Right ventricle myocardium superior (tissue), 1 donor: ENCODE measurements at regions of chr10 and their contacts with region 1.

Region 1: DNA sequence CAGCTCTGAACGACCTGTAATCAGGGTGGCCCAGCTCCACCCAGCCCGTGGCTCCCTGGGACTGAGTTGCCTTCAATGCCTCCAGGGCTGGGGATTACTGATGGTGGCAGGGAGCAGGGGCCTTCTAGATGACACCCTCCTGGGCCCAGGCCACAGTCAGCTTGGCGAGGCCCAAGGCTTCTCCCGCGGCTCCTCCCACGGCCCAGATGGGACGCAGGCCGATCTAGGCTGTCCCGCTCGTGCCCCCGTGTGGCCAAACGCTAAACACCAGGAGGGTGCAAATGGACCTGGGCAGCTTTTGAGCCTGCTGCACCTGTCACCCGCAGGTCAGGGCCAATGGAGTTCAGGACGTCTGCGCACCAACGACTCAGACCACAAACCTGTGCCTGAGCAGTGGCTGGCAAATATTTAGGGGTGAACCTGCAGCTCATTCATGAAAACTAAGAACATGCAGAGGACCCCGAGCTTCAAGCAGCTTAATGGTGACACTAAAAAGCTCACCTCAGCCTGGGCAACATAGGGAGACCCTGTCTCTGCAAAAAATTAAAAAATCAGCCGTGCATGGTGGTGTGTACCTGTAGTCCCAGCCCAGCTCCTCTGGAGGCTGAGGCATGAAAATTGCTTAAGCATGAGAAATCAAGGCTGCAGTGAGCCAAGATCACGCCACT is 43.2 kb downstream of the ASB13 start:
- DNase-seq: peak; percentile 94
- ATAC-seq: peak; percentile 97

Region 2: GRCh38 chr10:5446390-5446926 is 176.8 kb before region 1 on chr10:
- intact Hi-C with region 1: loop called (anchors 2 kb)
- DNase-seq: peak; percentile 95
- ATAC-seq: peak; percentile 96